Head of caudate nucleus (tissue), 42 donors: ENCODE measurements at regions of chr11 and their contacts with region 1.

Region 1: DNA sequence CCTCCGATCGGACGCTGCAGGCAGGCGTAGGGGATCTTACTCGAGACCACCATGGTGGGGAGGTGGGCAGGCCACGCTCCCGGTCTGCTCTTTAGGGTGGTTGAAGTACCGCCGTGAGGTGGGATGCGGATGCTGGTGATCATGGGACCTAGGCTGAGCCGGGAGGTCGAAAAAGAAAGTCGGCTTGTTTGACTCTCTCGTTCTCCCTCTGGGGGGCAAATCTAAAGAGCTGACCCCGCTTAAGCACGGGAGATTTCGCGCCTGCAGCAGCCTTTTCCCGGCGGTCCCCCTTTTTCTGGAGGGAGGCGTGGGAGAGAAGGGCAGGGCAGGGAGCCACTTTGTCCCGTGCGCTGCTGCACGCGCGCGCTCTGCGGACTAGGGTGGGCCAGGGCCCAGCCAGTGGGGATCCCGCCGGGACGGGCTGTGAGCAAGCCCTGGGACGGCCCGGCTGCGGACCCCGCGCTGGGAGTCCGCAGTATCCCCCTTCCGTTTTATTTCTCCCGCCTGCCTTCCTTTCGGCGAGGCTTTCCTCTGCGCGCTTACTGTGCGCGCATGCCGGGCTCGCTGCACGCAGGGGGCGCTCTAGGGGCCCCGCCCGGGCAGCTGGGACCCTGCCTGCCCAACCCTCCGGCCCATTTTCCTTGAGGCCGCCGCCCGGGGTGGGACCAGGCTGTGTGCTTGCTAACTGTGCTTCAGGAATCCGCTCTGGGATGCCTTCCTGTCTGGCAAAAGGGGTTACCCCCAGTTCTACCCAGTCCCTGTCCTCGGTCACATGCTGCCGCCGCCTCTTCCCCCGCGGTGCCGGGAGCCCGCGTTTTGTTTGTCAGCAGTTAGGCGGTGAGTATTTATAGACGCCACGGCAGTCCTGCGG is 81.0 kb downstream of the PRR5L start:
- DNase-seq: peak in 39 of 42 donors; percentile 21 to 82 (median 56)

Region 2: DNA sequence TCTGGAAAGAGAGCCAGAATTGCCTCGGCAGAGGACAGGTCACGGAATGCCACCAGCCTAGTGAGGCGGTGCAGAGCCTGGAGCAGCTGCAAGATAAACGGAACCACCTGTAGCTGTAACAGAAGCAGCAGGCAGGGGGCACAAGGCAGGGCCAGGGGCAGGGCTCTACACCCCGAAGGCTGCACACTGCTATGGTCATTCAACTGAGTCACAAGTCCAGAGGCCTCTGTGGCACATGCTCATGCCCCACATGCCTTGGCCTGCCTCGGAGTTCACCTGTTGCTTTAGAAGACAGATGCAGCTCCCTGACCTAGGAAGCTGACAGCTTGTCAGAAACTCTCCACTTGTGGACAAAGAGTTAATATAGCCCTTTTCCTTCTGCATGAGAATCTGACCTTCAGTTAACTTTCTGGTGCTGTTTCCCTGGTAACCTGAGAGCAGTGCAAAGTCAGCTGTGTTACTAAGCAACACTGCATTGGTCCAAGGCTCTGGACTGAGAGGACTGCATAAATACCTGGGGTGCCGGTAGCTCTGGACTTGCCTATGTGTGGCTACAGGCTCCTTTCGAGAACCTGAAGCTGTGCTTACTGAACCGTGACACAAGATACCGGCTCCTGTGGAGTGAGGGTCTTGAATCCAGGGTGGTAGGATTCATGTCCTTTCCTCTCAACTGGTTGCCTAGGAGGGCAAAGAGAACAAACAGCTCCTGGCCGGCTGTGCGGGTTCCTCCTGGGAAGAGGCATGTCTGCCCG is 98.4 kb before region 1 on chr11:
- intact Hi-C with region 1: no loop called
- DNase-seq: peak in 2 of 42 donors; percentile 25 to 41

Region 3: GRCh38 chr11:36292311-36292722 is 84.8 kb before region 1 on chr11:
- intact Hi-C with region 1: loop called (anchors 5 kb)
- DNase-seq: peak in 2 of 42 donors; percentile 17 to 48

Region 4: DNA sequence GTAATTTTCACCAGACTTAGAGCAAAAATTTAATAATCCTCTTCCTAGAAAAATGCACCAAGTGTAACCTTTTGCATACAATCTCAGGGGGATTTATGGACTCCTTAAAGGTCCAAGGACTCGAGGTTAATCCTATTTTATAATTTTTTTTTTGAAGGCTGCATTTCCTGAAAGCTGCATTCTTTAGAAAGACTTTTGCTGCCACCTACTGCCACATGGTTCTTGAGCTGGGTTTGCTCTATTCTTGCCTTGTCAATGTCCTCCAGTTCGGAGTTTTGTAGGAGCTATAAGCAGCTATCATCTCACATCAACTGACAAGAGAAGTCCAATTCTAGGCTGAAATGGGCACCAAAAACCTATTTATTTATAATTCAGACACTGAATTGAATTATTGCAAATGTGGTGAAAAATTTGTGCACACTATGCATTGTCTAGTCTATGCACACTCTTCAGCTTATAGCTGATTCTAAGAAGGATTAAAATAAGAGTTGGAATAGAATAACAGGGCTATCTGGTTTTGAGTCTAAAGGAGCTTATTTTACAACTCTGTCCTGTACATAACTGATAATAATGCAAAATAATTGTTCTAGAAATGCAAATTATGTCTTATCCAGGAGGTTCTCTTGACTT is 101.7 kb after region 1 on chr11:
- intact Hi-C with region 1: loop called (anchors 10 kb)
- DNase-seq: peak in 32 of 42 donors; percentile 27 to 84 (median 64)